T-cell (primary cell): ENCODE measurements at regions of chr5 and their contacts with region 1.

Region 1: DNA sequence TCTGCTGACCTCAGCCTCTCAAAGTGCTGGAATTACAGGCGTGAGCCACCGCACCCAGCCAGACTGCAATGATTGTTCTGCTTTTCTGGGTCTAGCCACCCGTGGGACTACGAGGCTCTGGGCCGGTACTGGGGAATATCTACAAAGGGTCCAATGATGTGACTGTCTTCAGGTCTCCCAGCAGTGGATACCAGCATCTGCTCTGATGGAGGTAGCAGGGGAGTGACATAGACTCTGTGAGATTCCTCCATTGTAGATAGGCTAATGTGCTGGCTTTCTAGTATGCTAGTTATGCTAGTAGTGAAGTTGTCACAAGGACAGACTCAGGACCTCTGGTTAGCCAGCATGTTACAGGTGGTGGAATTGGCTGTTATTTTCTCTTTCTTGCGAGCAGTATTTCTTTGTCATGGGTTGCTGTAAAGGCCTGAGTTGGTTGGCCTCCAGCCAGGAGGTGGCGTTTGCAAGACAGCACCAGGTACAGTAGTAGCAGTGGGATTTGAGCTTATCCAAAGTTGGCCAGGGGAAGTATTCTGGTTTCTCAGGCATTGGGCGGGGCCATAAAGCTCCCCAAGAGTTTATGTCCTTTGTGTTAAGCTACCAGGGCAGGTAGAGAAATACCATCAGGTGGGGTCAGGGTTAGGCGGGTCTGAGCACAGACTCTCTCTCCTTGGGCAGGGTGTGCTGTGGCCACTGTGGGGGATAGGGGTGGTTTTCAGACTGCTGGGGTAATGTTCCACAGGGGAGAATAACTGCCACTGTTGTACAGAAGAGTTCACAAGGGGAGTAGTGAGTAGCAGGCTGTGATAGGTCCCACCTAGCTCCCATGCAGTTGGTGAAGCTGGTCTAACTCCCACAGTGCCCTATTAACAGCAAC is 105.2 kb downstream of the SGCD start:
- DNase-seq: no peak
- ATAC-seq: no peak
- H3K4me3 ChIP-seq: no peak overlapping the region
- H3K4me3 Mint-ChIP-seq: no peak overlapping the region
- H3K27ac ChIP-seq: no peak overlapping the region
- H3K27ac Mint-ChIP-seq: no peak overlapping the region
- H3K4me1 ChIP-seq: no peaks in the 10 kb centered on the region
- H3K4me1 Mint-ChIP-seq: no peaks in the 10 kb centered on the region
- H3K27me3 ChIP-seq: peaks cover 0 to 4% of the 10 kb centered on the region in 2 experiments
- H3K27me3 Mint-ChIP-seq: peaks cover 19 to 24% of the 10 kb centered on the region in 2 donors

Region 2: DNA sequence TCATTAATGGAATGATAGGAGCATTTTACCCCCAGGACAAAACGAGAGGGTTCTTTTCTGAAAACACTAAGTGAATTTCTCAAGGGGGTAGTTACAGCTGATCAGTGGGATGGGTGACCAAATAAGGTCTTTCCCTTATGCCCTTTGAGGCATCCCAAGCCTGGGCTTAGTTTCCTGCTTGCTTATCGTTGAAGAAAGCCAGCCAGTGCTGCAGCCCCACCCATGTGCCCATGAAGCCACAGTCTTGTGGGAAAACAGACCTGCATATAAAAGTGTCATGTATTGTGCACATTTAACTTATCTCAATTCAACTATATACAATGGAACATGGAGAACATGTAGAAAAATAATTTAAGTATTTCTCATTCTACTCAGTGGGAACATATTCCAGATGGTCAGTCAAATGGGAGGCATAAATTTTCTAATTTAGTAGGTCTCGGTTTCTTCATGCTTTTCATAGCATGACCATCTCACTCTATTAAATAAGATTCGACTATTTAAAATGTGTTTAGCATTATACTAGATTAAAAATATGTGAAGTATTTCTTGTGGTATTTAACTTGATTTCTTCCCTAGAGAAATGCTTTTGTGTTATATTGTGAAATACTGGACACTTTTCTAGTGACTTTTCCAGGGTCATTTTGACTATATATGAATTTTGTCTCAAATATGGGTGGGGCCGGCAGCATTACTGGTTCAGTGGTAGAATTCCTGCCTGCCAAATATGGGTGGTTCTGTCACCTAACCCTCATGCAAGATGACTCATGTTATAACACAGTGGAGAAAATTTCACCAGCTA is 294.9 kb before region 1 on chr5:
- CTCF ChIA-PET with region 1: no interaction called
- POLR2A ChIA-PET with region 1: no interaction called
- DNase-seq: no peak
- ATAC-seq: no peak
- H3K4me3 ChIP-seq: no peak overlapping the region
- H3K4me3 Mint-ChIP-seq: no peak overlapping the region
- H3K27ac ChIP-seq: no peak overlapping the region
- H3K27ac Mint-ChIP-seq: no peak overlapping the region
- H3K4me1 ChIP-seq: no peaks in the 10 kb centered on the region
- H3K4me1 Mint-ChIP-seq: peaks cover 0 to 1% (median 0%) of the 10 kb centered on the region in 3 donors
- H3K27me3 ChIP-seq: no peaks in the 10 kb centered on the region
- H3K27me3 Mint-ChIP-seq: peaks cover 0 to 7% of the 10 kb centered on the region in 2 donors

Region 3: DNA sequence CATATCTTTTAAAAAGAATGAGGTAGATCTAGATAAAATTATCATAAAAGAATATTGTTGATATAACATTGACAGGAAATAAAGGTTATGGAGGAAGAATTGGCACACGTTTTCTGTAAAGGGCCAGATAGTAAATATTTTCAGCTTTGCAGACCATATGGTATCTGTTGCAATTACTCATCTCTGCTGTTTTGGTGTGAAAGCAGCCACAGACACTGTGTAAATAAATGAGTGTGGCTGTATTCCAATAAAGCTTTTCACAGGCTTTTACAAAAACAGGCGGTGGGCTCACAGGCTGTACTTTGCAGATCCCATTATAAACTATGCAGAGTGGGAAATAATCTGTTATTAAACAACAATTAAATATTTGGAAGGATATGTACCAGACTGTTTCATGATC is 17.8 kb before region 1 on chr5:
- CTCF ChIA-PET with region 1: no interaction called
- POLR2A ChIA-PET with region 1: no interaction called
- DNase-seq: no peak
- ATAC-seq: no peak
- H3K4me3 ChIP-seq: no peak overlapping the region
- H3K4me3 Mint-ChIP-seq: no peak overlapping the region
- H3K27ac ChIP-seq: no peak overlapping the region
- H3K27ac Mint-ChIP-seq: no peak overlapping the region
- H3K4me1 ChIP-seq: no peaks in the 10 kb centered on the region
- H3K4me1 Mint-ChIP-seq: no peaks in the 10 kb centered on the region
- H3K27me3 ChIP-seq: no peaks in the 10 kb centered on the region
- H3K27me3 Mint-ChIP-seq: peaks cover 3 to 14% of the 10 kb centered on the region in 2 donors

Region 4: GRCh38 chr5:156593546-156593945 is 161.4 kb after region 1 on chr5:
- CTCF ChIA-PET with region 1: no interaction called
- POLR2A ChIA-PET with region 1: interaction called in 1 of 2 experiments, 11 read pairs
- DNase-seq: no peak
- ATAC-seq: no peak
- H3K4me3 ChIP-seq: no peak overlapping the region
- H3K4me3 Mint-ChIP-seq: no peak overlapping the region
- H3K27ac ChIP-seq: no peak overlapping the region
- H3K27ac Mint-ChIP-seq: no peak overlapping the region
- H3K4me1 ChIP-seq: no peaks in the 10 kb centered on the region
- H3K4me1 Mint-ChIP-seq: no peaks in the 10 kb centered on the region
- H3K27me3 ChIP-seq: no peaks in the 10 kb centered on the region
- H3K27me3 Mint-ChIP-seq: peaks cover 27 to 33% of the 10 kb centered on the region in 2 donors